ENCODE measurements at regions of chr2 and their contacts with region 1.

Region 1: DNA sequence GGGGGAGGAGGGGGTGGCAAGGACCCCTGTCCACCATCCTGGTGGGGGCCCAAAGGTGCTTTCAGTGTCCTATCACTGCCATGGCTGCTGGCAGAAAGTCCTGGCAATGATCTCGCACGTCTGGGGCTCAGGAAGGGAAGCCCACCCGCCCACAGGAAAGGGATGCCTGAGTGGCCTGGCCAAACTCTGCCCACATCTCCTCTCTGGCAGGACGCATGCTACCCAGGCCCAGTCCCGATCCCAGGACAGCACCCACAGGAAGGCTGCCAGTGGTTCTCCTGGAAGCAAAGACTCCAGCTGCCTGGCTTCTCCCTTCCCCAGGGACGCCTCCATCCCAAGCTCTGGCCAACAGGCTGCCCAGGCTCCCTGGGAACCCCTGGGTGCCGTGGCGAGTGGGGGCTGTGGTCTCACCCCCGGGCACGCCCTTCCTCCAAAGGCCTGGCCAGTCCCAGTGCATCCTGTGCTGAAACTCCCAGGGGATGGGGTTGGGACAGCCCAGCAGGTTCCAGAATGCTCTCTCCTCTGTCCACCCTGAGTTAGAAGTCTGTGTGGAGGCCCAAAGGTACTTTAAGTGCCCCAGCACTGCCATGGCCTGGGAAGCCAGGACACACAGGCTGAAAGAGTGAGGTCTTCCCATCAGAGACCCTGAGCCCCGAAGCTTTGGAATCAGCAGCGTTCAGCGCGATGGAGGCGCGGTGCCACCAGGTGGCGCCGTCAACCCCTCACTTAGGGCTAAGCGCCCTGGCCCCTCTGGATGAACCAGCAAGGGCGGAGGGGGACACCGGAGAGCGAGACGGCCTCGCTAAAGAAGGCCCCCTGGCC is 29.8 kb upstream of the TAF1B start:
- DNase-seq: peak in 1 of 2 donors; percentile 81
- H3K4me3 ChIP-seq: peak overlapping the region; percentile 10 to 40
- H3K27ac ChIP-seq: no peak overlapping the region
- H3K4me1 ChIP-seq: peaks cover 0 to 7% of the 10 kb centered on the region in 2 donors
- H3K27me3 ChIP-seq: no peaks in the 10 kb centered on the region
- CTCF ChIP-seq: peak; percentile 76 to 96 (median 88)

Region 2: DNA sequence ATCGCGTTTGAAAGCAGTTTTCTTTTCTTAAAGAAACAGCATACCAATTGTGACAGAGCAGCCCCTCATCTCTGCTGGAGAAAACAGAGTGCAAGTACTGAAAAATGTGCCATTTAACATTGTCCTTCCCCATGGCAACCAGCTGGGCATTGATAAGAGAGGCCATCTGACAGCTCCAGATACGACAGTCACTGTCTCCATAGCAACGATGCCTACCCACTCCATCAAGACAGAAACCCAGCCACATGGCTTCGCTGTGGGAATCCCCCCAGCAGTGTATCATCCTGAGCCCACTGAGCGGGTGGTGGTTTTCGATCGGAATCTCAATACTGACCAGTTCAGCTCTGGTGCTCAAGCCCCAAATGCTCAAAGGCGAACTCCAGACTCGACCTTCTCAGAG is 147.5 kb after region 1 on chr2:
- intact Hi-C with region 1: loop called (anchors 5 kb)
- DNase-seq: no peak
- H3K4me3 ChIP-seq: no peak overlapping the region
- H3K27ac ChIP-seq: no peak overlapping the region
- H3K4me1 ChIP-seq: no peaks in the 10 kb centered on the region
- H3K27me3 ChIP-seq: no peaks in the 10 kb centered on the region
- CTCF ChIP-seq: no peak

Region 3: DNA sequence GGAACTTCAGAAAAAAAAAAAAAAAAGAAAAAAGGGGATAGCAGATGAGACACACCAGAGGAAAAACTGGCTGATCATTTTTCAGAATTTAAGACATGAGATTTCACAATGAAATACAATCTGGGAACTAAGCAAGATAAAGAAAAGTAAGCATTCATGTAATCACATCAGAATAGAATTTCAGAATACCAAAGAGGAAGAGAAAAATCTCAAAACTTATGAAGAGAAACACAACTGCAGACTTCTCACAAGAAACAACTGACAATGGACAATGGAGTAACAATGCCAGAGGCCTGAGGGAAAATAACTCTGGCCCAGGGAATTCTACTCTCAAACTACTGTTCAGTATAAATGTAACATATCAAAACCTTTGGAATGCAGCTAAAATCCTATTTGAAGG is 295.8 kb after region 1 on chr2:
- intact Hi-C with region 1: no loop called
- DNase-seq: no peak
- H3K4me3 ChIP-seq: no peak overlapping the region
- H3K27ac ChIP-seq: no peak overlapping the region
- H3K4me1 ChIP-seq: no peaks in the 10 kb centered on the region
- H3K27me3 ChIP-seq: no peaks in the 10 kb centered on the region
- CTCF ChIP-seq: no peak

Region 4: DNA sequence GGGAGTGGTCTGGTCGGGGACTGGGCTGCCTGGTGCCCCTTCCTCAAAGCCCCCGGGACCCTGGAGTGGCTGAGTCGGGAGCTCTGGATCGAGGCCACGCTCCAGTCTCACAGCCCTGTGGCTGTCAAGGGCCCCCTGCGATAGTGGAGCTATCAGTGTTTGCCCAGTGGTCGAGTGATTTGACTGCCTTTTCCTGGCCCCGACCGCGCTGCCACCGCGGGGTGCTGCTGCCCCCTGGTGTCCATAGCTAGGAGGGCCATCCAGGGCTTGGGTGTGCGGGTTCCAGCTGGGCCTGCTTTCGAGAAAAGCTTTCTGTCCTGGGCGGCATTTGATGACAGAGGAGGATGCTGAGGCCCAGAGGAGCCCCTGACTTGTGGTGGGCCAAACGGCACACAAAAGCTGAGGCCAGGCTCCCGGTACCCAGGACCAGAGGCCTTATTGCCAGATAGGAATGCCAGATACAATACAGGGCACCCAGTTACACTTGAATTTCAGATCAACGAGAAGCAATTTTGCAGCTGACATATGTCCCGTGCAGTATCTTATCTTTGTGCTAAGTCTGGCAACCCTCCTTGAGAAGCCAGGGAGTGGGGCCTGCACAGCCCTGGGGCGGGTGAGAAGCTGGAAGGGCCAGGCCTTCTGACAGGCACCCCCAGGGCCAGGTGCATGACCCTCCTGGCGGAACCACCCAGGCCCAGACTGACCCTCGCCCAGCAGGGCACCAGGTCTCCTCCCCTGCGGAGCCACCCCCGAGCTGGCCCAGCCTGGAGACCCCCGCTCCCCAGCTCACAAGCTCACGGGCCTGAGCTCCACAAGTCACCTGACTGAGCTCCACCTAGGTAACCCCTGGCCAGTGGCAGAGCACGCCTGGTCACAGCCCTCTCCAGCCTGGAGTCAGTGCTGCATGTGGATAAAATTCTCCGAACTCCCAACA is 621.6 kb after region 1 on chr2:
- intact Hi-C with region 1: loop called (anchors 10 kb)
- DNase-seq: peak in 1 of 2 donors; percentile 84
- H3K4me3 ChIP-seq: no peak overlapping the region
- H3K27ac ChIP-seq: no peak overlapping the region
- H3K4me1 ChIP-seq: peaks cover 0 to 2% of the 10 kb centered on the region in 2 donors
- H3K27me3 ChIP-seq: no peaks in the 10 kb centered on the region
- CTCF ChIP-seq: peak; percentile 94 to 99 (median 95)

Measured in ascending aorta (tissue), 2 donors.